ENCODE measurements at regions of chr14 and their contacts with region 1.

Region 1: DNA sequence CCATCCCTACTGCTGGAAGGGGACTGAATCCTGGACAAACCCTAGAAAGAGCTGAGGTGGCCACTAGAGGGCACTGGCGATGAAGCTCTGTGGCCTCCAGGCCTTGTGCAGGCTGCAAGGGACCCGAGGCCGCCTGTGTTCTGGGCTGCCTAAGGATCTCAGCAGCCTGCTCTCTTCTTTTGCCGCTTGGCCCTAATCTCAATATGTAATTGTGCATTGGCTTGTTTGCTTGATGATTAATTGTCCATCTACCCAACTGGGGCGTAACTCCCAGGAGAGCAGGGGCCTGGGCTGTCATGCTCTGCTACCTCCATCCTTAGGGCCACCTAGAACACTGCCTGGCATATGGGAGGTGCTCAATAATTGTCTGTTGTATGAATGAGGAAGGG is 73.8 kb downstream of the SYNE3 start:
- DNase-seq: peak; percentile 89
- CTCF ChIP-seq: peak; percentile 79

Region 2: DNA sequence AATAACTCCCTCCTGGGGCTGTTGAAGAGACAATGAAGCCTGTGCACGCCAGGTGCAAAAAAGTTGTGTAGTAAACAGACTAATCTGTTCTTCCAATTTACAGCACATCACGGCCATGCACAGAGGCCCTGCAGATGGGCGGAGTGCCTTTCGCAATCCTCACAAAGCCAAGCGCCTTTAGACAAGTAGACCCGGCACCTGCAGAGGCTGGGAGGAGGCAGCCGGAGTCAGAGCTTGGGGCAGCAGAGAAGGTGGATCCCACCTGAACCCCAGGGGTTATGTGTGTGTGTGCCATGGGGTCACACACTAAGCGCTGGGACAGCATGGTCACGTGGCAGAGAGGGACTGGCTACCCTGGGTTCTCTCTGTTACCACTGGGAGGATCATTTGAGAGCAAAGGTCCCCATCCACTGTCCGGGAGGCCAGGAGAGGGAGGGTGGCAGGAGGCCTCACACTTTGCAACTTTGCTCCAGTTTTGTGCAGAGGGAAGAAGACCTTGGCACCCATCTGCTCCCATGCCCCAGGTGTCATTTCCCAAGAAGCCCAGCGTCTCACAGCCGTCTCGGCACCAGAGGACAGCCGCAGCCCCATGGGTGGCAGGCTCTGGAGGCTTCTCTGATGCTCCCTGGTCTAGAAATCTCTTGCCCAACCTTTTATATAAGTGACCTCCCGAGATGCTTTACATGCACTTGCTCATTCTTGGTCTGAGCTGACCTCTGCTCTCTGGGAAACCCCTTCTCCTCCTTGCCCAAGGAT is 205.3 kb before region 1 on chr14:
- in situ Hi-C with region 1: no loop called
- DNase-seq: no peak
- CTCF ChIP-seq: no peak

Region 3: DNA sequence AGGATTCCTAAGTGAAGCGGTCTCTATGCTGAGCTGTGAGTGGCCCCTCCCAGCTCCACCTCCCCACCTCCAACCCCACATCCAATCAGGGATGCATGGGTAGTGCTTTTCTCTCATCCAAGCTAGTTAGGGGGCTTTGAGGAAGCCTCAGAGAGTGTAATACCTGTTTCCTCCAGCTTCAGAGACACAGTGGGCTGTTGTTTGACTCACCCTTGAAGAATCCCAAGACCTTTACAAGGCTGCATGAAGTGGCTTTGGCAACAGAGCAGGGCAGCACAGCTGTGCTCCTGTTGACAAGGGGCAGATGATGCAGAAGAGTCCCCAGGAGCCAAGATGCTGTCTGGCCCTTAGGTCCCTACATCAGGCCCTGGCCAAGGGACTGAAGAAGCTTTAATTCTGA is 95.8 kb before region 1 on chr14:
- in situ Hi-C with region 1: no loop called
- DNase-seq: no peak
- CTCF ChIP-seq: no peak

Region 4: GRCh38 chr14:95527387-95528002 is 84.9 kb after region 1 on chr14:
- in situ Hi-C with region 1: loop called (anchors 5 kb)
- DNase-seq: no peak
- CTCF ChIP-seq: peak; percentile 72

Measured in GM13976 (cell line).